ENCODE measurements at regions of chr1 and their contacts with region 1.

Region 1: GRCh38 chr1:21289700-21290545 is at the start of gene ECE1:
- DNase-seq: peak; percentile 49
- ATAC-seq: peak; percentile 87
- H3K4me3 ChIP-seq: peak within 1 kb of the TSS; percentile 85
- H3K27ac ChIP-seq: no peak within 1 kb of the TSS
- H3K4me1 ChIP-seq: peaks cover 20% of the 10 kb centered on the region; the same call in 1 of the 2 replicates
- H3K27me3 ChIP-seq: no peaks in the 10 kb centered on the region
- CTCF ChIP-seq: no peak
- total RNA-seq, gene ECE1: 86.8 and 110 TPM in 2 replicates

Region 2: GRCh38 chr1:20997602-20998224 is 292.2 kb before region 1 on chr1:
- CTCF ChIA-PET with region 1: no interaction called
- POLR2A ChIA-PET with region 1: interaction called, 11 read pairs
- intact Hi-C with region 1: no loop called
- DNase-seq: no peak
- ATAC-seq: no peak
- H3K4me3 ChIP-seq: no peak overlapping the region
- H3K27ac ChIP-seq: no peak overlapping the region
- H3K4me1 ChIP-seq: no peaks in the 10 kb centered on the region
- H3K27me3 ChIP-seq: no peaks in the 10 kb centered on the region
- CTCF ChIP-seq: no peak

Region 3: DNA sequence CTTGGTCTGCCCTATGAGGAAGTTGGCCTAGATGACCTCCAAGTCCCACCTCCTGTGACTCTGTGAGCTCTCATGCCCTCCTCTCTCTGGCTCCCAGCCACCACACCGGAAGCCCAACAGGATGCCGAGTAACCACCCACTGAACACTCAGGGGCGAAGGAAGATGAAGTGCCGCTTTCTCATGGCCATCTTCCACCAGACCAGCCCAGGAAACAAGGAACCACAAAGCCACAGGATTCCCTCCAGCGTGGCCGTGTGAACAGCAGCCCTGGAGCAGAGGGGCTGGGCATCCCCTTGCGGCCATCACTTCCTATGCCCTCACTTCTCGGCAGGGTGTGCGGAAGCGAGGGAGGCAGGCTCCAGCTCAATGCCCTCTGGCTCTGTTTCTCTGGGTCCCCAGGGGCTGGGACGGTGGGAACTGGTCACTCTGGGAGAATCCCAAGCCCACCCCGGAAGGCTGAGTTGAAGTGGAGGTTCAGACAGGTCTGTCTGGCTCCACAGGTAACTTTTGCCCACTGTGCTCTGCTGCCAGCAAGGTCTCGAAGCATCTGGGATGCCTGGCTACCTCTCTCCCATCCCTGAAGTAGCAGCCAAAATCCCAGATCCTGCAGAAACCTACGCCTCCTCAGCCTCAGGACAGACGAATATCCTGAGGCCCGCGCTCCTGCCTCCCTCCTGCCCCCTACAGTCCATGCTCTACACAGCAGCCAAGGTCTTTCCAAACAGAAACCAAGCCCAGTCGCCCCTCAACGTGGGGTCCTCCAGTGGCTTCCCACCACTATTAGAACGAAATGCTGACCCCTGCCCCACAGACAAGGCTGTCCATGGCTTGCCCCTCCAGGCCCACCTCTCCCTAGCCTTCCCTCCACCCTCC is 44.5 kb after region 1 on chr1:
- CTCF ChIA-PET with region 1: interaction called, 4 read pairs
- POLR2A ChIA-PET with region 1: no interaction called
- intact Hi-C with region 1: loop called (anchors 5 kb)
- DNase-seq: peak; percentile 84
- ATAC-seq: peak; percentile 49
- H3K4me3 ChIP-seq: peak overlapping the region; percentile 48; the same call in 1 of the 2 replicates
- H3K27ac ChIP-seq: peak overlapping the region; percentile 91
- H3K4me1 ChIP-seq: peaks cover 71% of the 10 kb centered on the region
- H3K27me3 ChIP-seq: no peaks in the 10 kb centered on the region
- CTCF ChIP-seq: peak; percentile 76